Upper lobe of right lung (tissue), 1 donor: ENCODE measurements at regions of chr7 and their contacts with region 1.

Region 1: GRCh38 chr7:74401137-74401859 is 52.4 kb upstream of the GTF2IRD1 start:
- DNase-seq: no peak
- ATAC-seq: peak; percentile 84
- H3K4me3 ChIP-seq: no peak overlapping the region
- H3K27ac ChIP-seq: no peak overlapping the region
- H3K4me1 ChIP-seq: no peaks in the 10 kb centered on the region
- H3K27me3 ChIP-seq: no peaks in the 10 kb centered on the region
- CTCF ChIP-seq: peak; percentile 98

Region 2: GRCh38 chr7:73865738-73866445 is 535.4 kb before region 1 on chr7:
- intact Hi-C with region 1: loop called (anchors 10 kb)
- DNase-seq: no peak
- ATAC-seq: peak; percentile 67
- H3K4me3 ChIP-seq: no peak overlapping the region
- H3K27ac ChIP-seq: no peak overlapping the region
- H3K4me1 ChIP-seq: peaks cover 19% of the 10 kb centered on the region
- H3K27me3 ChIP-seq: no peaks in the 10 kb centered on the region
- CTCF ChIP-seq: peak; percentile 68

Region 3: DNA sequence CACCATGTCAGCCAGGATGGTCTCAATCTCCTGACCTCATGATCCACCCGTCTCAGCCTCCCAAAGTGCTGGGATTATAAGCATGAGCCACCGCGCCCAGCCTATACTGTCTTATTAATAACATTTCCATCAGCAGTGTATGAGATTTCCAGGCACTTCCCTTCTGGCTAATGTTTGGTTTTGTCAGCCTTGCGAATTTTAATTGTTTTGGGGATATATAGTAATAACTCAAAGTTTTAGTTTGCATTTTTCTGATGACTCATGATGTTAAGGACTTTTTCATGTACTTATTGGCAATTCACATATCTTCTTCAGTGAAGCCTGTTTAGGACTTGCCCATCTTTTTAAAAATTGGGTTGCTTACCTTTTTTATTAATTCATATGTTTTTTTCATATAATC is 464.3 kb before region 1 on chr7:
- intact Hi-C with region 1: no loop called
- DNase-seq: no peak
- ATAC-seq: no peak
- H3K4me3 ChIP-seq: no peak overlapping the region
- H3K27ac ChIP-seq: no peak overlapping the region
- H3K4me1 ChIP-seq: no peaks in the 10 kb centered on the region
- H3K27me3 ChIP-seq: no peaks in the 10 kb centered on the region
- CTCF ChIP-seq: no peak

Region 4: GRCh38 chr7:74206589-74207120 is 194.6 kb before region 1 on chr7:
- intact Hi-C with region 1: loop called (anchors 2 kb)
- DNase-seq: peak; percentile 92
- ATAC-seq: peak; percentile 93
- H3K4me3 ChIP-seq: peak overlapping the region; percentile 28
- H3K27ac ChIP-seq: no peak overlapping the region
- H3K4me1 ChIP-seq: peaks cover 12% of the 10 kb centered on the region
- H3K27me3 ChIP-seq: no peaks in the 10 kb centered on the region
- CTCF ChIP-seq: peak; percentile 97

Region 5: DNA sequence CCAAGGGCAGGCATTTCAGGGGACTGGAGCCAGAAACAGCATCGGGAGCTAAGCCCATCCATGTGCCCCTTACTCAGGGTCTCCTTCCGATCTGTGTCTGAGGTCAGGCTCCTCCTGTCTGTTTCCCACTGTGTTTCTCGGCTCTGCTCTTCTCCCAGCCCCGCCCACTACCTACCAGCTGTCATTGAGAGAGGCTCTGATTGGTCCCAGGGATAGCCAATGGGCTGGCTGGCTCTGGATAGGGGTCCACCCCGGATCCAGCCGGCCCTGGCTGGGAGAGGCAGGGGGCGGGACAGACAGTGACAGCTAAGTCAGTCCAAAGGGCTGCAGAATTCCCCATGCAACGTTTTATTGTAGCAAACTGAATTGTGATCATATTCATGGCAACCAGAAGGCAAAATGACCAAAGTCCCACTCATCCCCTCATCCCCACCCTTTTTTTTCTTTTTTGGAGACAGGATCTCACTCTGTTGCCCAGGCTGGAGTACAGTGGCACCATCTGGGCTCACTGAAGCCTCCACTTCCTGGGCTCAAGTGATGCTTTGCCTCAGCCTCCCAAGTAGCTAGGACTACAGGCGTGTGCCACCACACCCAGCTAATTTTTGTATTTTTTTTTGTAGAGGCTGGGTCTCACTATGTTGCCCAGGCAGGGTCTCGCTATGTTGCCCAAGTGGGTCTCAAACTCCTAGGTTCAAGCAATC is 35.8 kb before region 1 on chr7:
- intact Hi-C with region 1: no loop called
- DNase-seq: no peak
- ATAC-seq: peak; percentile 77
- H3K4me3 ChIP-seq: no peak overlapping the region
- H3K27ac ChIP-seq: no peak overlapping the region
- H3K4me1 ChIP-seq: no peaks in the 10 kb centered on the region
- H3K27me3 ChIP-seq: no peaks in the 10 kb centered on the region
- CTCF ChIP-seq: no peak